Activated CD4-positive, alpha-beta memory T cell treated with anti-CD3 and anti-CD28 coated beads, Interleukin-2, amount 10 ng/mL, durations not matched to agents 7 days and 5 days (primary cell): ENCODE measurements at regions of chr1 and their contacts with region 1.

Region 1: DNA sequence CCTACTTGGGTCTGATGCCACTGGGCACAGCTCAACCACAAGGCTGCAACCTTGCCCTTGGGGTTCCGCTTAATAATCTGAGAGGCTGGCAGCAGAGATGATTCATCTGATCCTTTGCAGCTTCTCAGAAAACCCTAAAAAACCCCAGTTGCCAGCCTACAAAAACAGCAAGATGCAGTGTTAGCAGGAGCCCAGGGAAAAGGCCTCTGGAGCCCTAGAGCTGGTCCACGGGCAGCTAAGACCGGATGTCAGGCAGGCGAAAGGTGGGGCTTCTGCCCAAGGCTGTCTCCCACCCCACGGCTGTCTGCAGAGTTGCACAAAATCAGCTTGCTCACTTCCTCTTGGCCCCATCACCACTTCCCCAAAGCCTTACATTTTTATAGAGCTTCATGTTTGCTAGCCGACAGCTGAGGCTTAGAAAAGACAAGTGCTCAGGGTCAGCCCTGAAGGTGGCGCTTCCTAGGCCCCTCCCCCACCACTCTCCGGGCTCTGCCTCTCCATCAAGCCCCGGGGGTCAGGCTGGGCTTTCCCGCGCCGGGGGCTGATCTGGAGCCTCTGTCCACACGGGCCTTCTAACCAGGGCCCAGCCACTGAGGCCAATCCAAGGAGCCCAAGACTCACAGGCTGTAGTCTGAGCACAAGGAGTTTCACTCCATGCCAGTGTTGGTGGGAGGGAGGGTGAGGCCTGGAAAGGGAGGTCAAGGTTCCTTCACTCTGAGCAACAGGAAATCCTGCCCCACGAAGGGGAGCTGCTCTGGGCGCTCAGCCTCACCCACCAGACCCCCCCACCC is 4.2 kb upstream of the ADORA3 start:
- DNase-seq: peak; percentile 86
- H3K4me3 Mint-ChIP-seq: peak overlapping the region; percentile 65
- H3K27ac Mint-ChIP-seq: peak overlapping the region; percentile 89
- H3K4me1 Mint-ChIP-seq: peaks cover 56% of the 10 kb centered on the region
- H3K27me3 Mint-ChIP-seq: no peaks in the 10 kb centered on the region

Region 2: GRCh38 chr1:111471012-111471411 is 36.6 kb before region 1 on chr1:
- CTCF ChIA-PET with region 1: interaction called, 90 read pairs
- POLR2A ChIA-PET with region 1: interaction called, 175 read pairs
- DNase-seq: peak; percentile 86
- H3K4me3 Mint-ChIP-seq: no peak overlapping the region
- H3K27ac Mint-ChIP-seq: no peak overlapping the region
- H3K4me1 Mint-ChIP-seq: peaks cover 30% of the 10 kb centered on the region
- H3K27me3 Mint-ChIP-seq: no peaks in the 10 kb centered on the region

Region 3: DNA sequence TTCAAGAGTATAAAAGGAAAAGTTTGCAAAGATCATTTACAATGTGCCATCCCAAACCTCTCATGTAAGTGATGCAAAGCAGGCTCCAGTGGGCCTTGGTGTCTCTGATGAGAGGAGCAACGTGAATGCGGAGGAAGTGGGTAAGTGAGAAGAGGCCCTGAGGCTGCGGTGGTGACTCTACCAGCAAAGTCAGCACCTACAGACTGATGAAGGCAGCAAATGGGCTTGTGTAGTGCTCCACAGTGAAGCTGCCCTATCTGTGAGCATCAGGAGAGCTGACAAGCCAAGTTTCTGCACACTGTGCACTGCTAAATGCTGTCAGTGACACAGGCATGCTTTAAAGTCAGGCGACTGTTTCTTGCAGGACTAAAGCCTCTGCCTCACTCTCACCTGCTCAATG is 96.4 kb after region 1 on chr1:
- CTCF ChIA-PET with region 1: interaction called, 61 read pairs
- POLR2A ChIA-PET with region 1: interaction called, 128 read pairs
- DNase-seq: peak; percentile 92
- H3K4me3 Mint-ChIP-seq: peak overlapping the region; percentile 76
- H3K27ac Mint-ChIP-seq: peak overlapping the region; percentile 98
- H3K4me1 Mint-ChIP-seq: peaks cover 75% of the 10 kb centered on the region
- H3K27me3 Mint-ChIP-seq: no peaks in the 10 kb centered on the region

Region 4: GRCh38 chr1:111639602-111640198 is 132.1 kb after region 1 on chr1:
- CTCF ChIA-PET with region 1: interaction called, 15 read pairs
- POLR2A ChIA-PET with region 1: interaction called, 10 read pairs
- DNase-seq: no peak
- H3K4me3 Mint-ChIP-seq: no peak overlapping the region
- H3K27ac Mint-ChIP-seq: no peak overlapping the region
- H3K4me1 Mint-ChIP-seq: peaks cover 57% of the 10 kb centered on the region
- H3K27me3 Mint-ChIP-seq: no peaks in the 10 kb centered on the region

Region 5: GRCh38 chr1:111690306-111690617 is 182.7 kb after region 1 on chr1:
- CTCF ChIA-PET with region 1: interaction called, 32 read pairs
- POLR2A ChIA-PET with region 1: no interaction called
- DNase-seq: no peak
- H3K4me3 Mint-ChIP-seq: no peak overlapping the region
- H3K27ac Mint-ChIP-seq: no peak overlapping the region
- H3K4me1 Mint-ChIP-seq: peaks cover 40% of the 10 kb centered on the region
- H3K27me3 Mint-ChIP-seq: no peaks in the 10 kb centered on the region

Region 6: GRCh38 chr1:111739194-111739924 is 231.8 kb after region 1 on chr1 and contains the start of gene INKA2:
- CTCF ChIA-PET with region 1: interaction called, 39 read pairs
- POLR2A ChIA-PET with region 1: interaction called, 36 read pairs
- DNase-seq: peak; percentile 86
- H3K4me3 Mint-ChIP-seq: peak within 1 kb of the TSS; percentile 84
- H3K27ac Mint-ChIP-seq: peak within 1 kb of the TSS; percentile 52
- H3K4me1 Mint-ChIP-seq: peaks cover 23% of the 10 kb centered on the region
- H3K27me3 Mint-ChIP-seq: peaks cover 47% of the 10 kb centered on the region
- total RNA-seq, gene INKA2: 2.4 to 2.8 TPM